ENCODE measurements at regions of chr1 and their contacts with region 1.

Region 1: DNA sequence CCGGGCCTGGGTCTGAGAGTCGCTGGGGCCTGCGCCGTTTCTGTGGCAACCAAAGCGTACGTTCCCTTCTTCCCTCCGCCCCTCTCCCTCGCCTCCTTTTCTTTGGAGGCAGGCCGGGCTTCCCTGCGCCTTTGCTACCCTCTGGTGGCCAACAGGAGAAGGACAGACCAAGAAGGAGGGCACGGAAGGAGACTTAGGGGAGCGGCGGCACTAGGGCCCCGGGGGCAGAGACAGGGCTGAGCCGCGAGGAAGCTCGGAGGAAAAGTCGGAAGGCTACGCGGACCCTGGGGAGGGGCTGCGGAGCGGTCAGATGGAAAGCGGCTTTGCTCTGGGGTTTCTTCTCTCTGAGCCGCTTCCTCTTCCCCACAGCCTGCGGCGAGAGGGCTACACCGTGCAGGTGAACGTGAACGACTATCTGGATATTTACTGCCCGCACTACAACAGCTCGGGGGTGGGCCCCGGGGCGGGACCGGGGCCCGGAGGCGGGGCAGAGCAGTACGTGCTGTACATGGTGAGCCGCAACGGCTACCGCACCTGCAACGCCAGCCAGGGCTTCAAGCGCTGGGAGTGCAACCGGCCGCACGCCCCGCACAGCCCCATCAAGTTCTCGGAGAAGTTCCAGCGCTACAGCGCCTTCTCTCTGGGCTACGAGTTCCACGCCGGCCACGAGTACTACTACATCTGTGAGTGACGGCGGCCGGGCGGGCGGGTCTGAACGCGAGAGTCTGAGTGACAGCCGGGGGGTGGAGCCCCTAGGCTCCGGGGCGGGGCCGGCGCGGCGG is 6.3 kb downstream of the EFNA3 start:
- DNase-seq: peak; percentile 95
- ATAC-seq: peak; percentile 85
- H3K4me3 Mint-ChIP-seq: peak overlapping the region; percentile 92
- H3K27ac Mint-ChIP-seq: peak overlapping the region; percentile 94
- H3K4me1 Mint-ChIP-seq: peaks cover 32% of the 10 kb centered on the region
- H3K27me3 Mint-ChIP-seq: peaks cover 33% of the 10 kb centered on the region

Region 2: GRCh38 chr1:154767315-154768240 is 317.3 kb before region 1 on chr1:
- CTCF ChIA-PET with region 1: no interaction called
- DNase-seq: no peak
- ATAC-seq: no peak
- H3K4me3 Mint-ChIP-seq: no peak overlapping the region
- H3K27ac Mint-ChIP-seq: no peak overlapping the region
- H3K4me1 Mint-ChIP-seq: no peaks in the 10 kb centered on the region
- H3K27me3 Mint-ChIP-seq: peaks cover 37% of the 10 kb centered on the region

Region 3: GRCh38 chr1:154955718-154956543 is 129.0 kb before region 1 on chr1 and contains the start of gene PBXIP1:
- CTCF ChIA-PET with region 1: interaction called, 10 read pairs
- DNase-seq: peak; percentile 92
- ATAC-seq: peak; percentile 62
- H3K4me3 Mint-ChIP-seq: peak within 1 kb of the TSS; percentile 95
- H3K27ac Mint-ChIP-seq: peak within 1 kb of the TSS; percentile 98
- H3K4me1 Mint-ChIP-seq: peaks cover 78% of the 10 kb centered on the region
- H3K27me3 Mint-ChIP-seq: no peaks in the 10 kb centered on the region
- total RNA-seq, gene PBXIP1: 52.6 to 61.5 TPM

Region 4: DNA sequence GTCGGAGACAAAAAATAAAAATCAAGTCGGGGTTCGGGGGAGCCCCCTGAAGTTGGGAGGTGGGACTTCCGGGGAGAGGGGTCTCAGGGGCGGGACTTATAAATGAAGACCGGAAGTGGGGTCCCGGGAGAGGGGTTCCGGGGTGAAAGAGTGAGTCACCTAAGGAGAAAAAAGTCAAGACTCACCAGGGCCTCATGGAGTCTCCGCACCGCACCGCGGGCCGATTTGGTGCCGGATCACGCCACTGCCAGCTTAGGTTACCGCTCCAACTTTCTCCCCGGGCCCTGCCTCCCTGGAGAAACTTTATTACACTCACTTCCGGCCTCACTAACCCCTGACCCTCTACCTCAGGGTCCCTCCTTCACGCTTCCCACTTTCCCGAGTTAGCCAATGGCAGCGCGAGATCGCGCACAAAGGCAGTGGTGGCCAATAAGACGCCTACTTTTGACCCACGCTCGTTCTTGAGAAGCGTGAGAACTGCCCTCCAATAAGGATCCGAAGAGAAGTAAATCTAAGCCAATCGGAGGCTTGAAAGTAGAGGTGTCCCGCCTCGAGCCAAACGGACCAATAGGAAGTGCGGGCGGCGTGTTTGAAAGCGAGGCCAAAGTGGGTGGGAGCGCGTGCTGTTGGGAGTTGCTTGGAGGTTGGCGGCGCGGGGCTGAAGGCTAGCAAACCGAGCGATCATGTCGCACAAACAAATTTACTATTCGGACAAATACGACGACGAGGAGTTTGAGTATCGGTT is 110.7 kb before region 1 on chr1 and contains the start of gene CKS1B:
- CTCF ChIA-PET with region 1: interaction called, 17 read pairs
- DNase-seq: peak; percentile 98
- ATAC-seq: peak; percentile 89
- H3K4me3 Mint-ChIP-seq: no peak within 1 kb of the TSS
- H3K27ac Mint-ChIP-seq: no peak within 1 kb of the TSS
- H3K4me1 Mint-ChIP-seq: peaks cover 38% of the 10 kb centered on the region
- H3K27me3 Mint-ChIP-seq: no peaks in the 10 kb centered on the region
- total RNA-seq, gene CKS1B: 149 to 155 TPM

Region 5: DNA sequence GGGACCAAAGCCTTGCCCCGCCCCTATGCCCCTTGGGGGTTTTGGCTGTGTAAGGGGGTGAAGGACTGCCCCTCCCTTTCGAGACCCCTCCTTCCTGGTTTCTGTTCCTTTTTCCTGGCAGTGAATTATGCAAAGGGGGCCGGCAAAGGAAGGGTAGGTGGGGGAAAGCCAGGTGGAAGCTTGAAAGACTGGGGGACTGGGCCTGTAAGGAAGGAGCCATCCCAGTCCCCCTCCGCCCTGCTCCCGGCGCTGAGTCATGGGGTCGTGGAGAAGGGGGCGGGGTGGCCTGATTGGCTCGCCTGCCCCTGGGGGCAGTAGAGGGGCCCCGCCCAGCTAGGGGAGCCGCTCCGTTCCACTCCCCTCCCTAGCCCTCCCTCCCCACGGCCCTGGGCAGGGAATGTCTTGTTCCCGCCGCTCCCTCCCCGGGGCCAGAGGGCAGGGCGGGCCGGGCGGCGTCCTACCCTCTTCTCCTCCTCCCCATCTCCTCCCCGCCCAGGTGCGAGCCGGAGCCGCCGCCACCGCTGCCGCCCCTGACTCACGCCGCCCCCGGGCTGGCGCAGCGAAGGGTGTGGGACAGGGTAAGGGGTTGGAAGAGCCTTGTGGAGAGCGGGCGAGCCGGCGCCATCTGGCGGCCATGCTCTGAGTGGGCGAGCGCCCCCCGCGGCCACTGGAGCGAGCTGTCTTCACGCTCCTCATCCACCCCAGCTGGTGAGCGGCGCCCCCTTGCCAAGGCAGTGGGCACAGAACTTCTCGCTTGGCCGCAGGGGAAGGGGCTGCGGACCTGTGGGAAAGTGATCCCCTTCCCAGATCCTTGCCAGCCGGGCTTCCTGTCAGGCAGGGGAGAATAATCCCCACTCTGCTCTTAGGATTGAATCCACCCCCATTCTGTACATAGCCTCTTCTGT is 67.6 kb before region 1 on chr1:
- CTCF ChIA-PET with region 1: interaction called, 12 read pairs
- DNase-seq: peak; percentile 89
- ATAC-seq: peak; percentile 99
- H3K4me3 Mint-ChIP-seq: peak overlapping the region; percentile 47
- H3K27ac Mint-ChIP-seq: peak overlapping the region; percentile 44
- H3K4me1 Mint-ChIP-seq: peaks cover 42% of the 10 kb centered on the region
- H3K27me3 Mint-ChIP-seq: no peaks in the 10 kb centered on the region

Region 6: DNA sequence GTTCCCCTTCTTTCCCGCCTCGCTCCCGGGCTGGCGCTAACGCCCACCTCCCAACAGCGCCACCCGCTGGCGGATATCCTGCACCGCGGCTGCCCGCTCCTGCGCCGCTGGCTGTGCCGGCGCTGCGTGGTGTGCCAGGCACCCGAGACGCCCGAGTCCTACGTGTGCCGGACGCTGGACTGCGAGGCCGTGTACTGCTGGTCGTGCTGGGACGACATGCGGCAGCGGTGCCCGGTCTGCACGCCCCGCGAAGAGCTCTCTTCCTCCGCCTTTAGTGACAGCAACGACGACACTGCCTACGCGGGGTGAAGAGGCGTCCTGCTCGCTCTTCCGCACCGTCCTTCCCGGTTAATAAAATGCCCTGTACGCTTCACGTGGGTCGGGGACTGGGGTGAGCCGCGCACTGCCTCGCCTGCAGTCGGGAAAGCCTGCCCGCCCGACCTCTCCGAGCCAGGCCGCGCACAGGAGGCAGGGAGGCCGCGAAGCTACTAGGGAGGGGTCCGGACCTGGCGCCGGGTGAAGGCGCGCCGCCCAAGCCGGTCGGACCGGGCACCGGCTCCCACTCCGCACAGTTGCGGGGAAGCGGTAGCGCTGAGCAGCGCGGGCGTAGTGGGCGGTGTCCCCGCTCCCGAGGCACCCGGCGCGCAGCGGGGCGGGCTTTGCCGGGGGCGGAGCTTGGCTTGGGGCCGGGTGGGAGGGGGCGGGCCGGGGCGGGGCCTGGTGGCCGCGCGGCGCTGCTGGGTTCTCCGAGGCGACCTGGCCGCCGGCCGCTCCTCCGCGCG is 34.2 kb before region 1 on chr1 and contains the start of gene ADAM15:
- CTCF ChIA-PET with region 1: interaction called, 319 read pairs
- DNase-seq: peak; percentile 83
- ATAC-seq: peak; percentile 90
- H3K4me3 Mint-ChIP-seq: peak within 1 kb of the TSS; percentile 79
- H3K27ac Mint-ChIP-seq: peak within 1 kb of the TSS; percentile 78
- H3K4me1 Mint-ChIP-seq: peaks cover 28% of the 10 kb centered on the region
- H3K27me3 Mint-ChIP-seq: no peaks in the 10 kb centered on the region
- total RNA-seq, gene ADAM15: 41.7 to 47.5 TPM

Region 7: GRCh38 chr1:155070721-155071569 is 14.0 kb before region 1 on chr1:
- CTCF ChIA-PET with region 1: interaction called, 319 read pairs
- DNase-seq: peak; percentile 87
- ATAC-seq: peak; percentile 92
- H3K4me3 Mint-ChIP-seq: peak overlapping the region; percentile 42
- H3K27ac Mint-ChIP-seq: peak overlapping the region; percentile 31
- H3K4me1 Mint-ChIP-seq: peaks cover 31% of the 10 kb centered on the region
- H3K27me3 Mint-ChIP-seq: peaks cover 12% of the 10 kb centered on the region

Region 8: GRCh38 chr1:155172732-155173477 is 88.0 kb after region 1 on chr1 and contains the start of gene KRTCAP2:
- CTCF ChIA-PET with region 1: interaction called, 295 read pairs
- DNase-seq: peak; percentile 98
- ATAC-seq: peak; percentile 84
- H3K4me3 Mint-ChIP-seq: peak within 1 kb of the TSS; percentile 82
- H3K27ac Mint-ChIP-seq: peak within 1 kb of the TSS; percentile 90
- H3K4me1 Mint-ChIP-seq: peaks cover 51% of the 10 kb centered on the region
- H3K27me3 Mint-ChIP-seq: no peaks in the 10 kb centered on the region
- total RNA-seq, gene KRTCAP2: 166 to 177 TPM

Region 9: GRCh38 chr1:155185351-155186066 is 100.6 kb after region 1 on chr1:
- CTCF ChIA-PET with region 1: no interaction called
- DNase-seq: no peak
- ATAC-seq: peak; percentile 54
- H3K4me3 Mint-ChIP-seq: no peak overlapping the region
- H3K27ac Mint-ChIP-seq: peak overlapping the region; percentile 10
- H3K4me1 Mint-ChIP-seq: peaks cover 11% of the 10 kb centered on the region
- H3K27me3 Mint-ChIP-seq: no peaks in the 10 kb centered on the region